CD4-positive, alpha-beta T cell (primary cell): ENCODE measurements at regions of chr21 and their contacts with region 1.

Region 1: DNA sequence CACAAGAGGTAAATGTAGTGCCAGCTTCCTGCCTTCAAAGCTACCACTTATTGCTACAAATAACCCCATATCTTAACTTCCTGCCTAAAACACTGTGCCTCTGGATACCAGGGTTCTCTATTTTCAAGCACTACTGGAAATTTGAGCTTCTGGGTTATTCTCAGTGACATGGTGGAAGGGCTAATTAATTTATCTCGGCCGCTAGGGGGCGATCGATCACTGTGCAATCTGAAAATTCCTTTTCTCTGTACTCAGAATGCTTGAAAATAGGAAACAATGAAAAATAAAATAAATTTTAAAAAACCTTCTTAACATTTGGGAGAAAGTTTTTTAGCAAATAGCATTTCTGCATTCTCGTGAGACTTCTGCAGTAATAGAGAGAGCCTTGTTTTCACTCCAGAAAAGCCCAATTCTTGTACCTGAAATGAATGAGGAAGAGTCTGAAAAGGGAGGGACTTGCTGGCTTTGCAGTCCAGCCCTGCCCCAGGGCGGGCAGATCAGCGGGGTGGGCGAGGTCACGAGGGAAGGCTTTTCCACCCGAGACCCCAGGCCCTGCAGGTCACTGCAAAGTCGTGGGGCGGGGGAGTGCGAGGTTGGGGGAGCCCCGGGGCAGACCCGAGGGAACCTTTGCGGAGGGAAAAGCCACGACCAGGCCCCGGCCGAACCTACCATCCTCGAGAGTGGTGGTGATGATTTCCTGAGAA is 276.7 kb downstream of the PCP4 start:
- DNase-seq: peak in 7 of 14 experiments; percentile 4 to 38 (median 15)
- ATAC-seq: no peak
- H3K4me3 ChIP-seq: no peak overlapping the region
- H3K4me3 Mint-ChIP-seq: no peak overlapping the region
- H3K27ac ChIP-seq: no peak overlapping the region
- H3K27ac Mint-ChIP-seq: no peak overlapping the region
- H3K4me1 ChIP-seq: no peaks in the 10 kb centered on the region
- H3K4me1 Mint-ChIP-seq: no peaks in the 10 kb centered on the region
- H3K27me3 ChIP-seq: no peaks in the 10 kb centered on the region
- H3K27me3 Mint-ChIP-seq: no peaks in the 10 kb centered on the region
- CTCF ChIP-seq: peak; percentile 72

Region 2: GRCh38 chr21:41068967-41069642 is 925.1 kb after region 1 on chr21:
- CTCF ChIA-PET with region 1: no interaction called
- POLR2A ChIA-PET with region 1: no interaction called
- intact Hi-C with region 1: loop called (anchors 5 kb)
- DNase-seq: peak; percentile 22 to 73 (median 46)
- ATAC-seq: peak; percentile 39
- H3K4me3 ChIP-seq: peak overlapping the region; percentile 23
- H3K4me3 Mint-ChIP-seq: no peak overlapping the region
- H3K27ac ChIP-seq: no peak overlapping the region
- H3K27ac Mint-ChIP-seq: no peak overlapping the region
- H3K4me1 ChIP-seq: peaks cover 7% of the 10 kb centered on the region
- H3K4me1 Mint-ChIP-seq: peaks cover 8% of the 10 kb centered on the region
- H3K27me3 ChIP-seq: peaks cover 18 to 30% of the 10 kb centered on the region in 2 experiments
- H3K27me3 Mint-ChIP-seq: peaks cover 45% of the 10 kb centered on the region
- CTCF ChIP-seq: peak; percentile 71

Region 3: DNA sequence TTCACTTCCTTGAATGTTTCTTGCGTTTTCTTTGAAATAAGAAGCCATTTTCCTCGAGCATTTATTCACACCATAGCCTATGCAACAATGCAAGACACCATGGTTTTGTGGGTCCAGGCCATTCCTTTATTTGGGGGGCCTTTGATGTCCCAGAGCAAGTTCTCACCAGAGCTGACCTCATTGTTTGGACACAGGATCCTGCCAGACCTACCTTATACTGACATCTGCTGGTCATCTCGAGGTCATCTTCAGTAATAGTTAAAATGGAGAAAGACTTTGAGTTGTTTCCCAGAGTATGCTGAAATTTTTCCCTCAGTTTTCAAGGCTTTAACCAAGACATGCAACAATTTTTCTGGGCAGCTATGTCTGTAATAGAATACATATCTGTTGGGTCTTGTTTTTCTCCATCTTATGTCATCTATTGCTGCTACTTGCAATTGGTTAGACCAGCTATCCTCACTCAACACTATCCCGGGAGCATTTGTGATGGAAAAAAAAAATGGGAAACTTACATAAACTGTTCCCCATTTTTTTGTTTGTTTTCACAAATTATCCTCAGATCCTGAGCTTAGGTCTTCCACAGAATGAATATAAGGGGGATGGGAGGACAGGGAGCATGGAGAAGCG is 990.0 kb after region 1 on chr21:
- CTCF ChIA-PET with region 1: no interaction called
- POLR2A ChIA-PET with region 1: no interaction called
- intact Hi-C with region 1: loop called in 1 of 2 experiments (anchors 10 kb)
- DNase-seq: peak in 1 of 14 experiments; percentile 7
- ATAC-seq: no peak
- H3K4me3 ChIP-seq: no peak overlapping the region
- H3K4me3 Mint-ChIP-seq: no peak overlapping the region
- H3K27ac ChIP-seq: no peak overlapping the region
- H3K27ac Mint-ChIP-seq: no peak overlapping the region
- H3K4me1 ChIP-seq: no peaks in the 10 kb centered on the region
- H3K4me1 Mint-ChIP-seq: no peaks in the 10 kb centered on the region
- H3K27me3 ChIP-seq: no peaks in the 10 kb centered on the region
- H3K27me3 Mint-ChIP-seq: peaks cover 9% of the 10 kb centered on the region
- CTCF ChIP-seq: no peak